Tibial artery (tissue), 4 donors: ENCODE measurements at regions of chr9 and their contacts with region 1.

Region 1: GRCh38 chr9:81689343-81690190 is at the start of gene TLE1:
- DNase-seq: peak; percentile 100
- H3K4me3 ChIP-seq: peak within 1 kb of the TSS; percentile 77 to 95
- H3K27ac ChIP-seq: peak within 1 kb of the TSS; percentile 91 to 98
- H3K4me1 ChIP-seq: peaks cover 0 to 27% (median 19%) of the 10 kb centered on the region in 4 donors
- H3K27me3 ChIP-seq: no peaks in the 10 kb centered on the region
- CTCF ChIP-seq: no peak

Region 2: GRCh38 chr9:81521892-81522291 is 167.7 kb before region 1 on chr9:
- intact Hi-C with region 1: loop called (anchors 2 kb)
- DNase-seq: no peak
- H3K4me3 ChIP-seq: no peak overlapping the region
- H3K27ac ChIP-seq: no peak overlapping the region
- H3K4me1 ChIP-seq: peaks cover 0 to 4% (median 0%) of the 10 kb centered on the region in 4 donors
- H3K27me3 ChIP-seq: no peaks in the 10 kb centered on the region
- CTCF ChIP-seq: no peak

Region 3: DNA sequence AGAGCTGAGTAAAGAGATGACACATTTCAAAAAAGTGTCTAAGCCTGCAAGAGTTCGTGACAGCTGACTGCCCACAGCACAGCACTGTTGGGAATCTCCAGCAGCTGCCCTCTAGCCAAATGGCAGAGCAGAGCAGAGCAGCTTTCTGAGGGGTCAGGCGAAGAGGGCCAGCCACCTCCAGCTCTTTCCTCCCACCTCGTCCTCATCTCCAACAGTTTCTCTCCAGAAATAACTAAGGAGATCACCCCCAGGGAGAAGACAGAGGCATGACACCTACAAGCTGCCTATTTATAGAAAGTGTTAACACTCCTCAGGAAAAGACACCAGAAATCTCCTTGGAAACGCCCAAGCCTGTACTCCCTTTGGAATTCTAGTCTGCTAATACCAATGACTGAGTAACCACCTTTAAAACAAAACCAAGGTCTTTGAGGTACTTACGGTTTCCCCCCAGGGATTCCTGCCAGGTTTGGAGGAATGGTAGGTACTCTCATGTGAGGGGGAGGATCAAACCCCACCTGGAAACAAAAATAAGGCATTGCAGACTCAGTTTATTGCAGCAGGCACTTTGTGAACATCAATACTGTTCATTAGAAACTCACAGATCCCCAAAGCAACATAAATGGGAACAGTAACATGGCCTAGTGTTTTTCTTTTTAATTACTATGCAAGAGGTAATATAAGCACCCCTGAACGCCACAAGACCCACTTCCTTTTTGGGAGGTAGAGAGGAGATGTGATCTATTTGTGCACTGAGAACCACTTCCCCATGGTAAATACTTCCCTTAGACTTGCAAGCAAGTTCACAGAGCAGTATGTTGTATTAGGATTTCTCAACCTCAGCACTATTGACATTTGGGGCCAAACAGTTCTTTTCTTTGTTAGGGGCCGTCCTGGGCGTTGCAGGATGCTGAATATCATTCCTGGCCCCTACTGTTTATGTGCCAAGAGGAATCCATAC is 79.5 kb before region 1 on chr9:
- intact Hi-C with region 1: loop called (anchors 5 kb)
- DNase-seq: no peak
- H3K4me3 ChIP-seq: no peak overlapping the region
- H3K27ac ChIP-seq: peak overlapping the region; percentile 15 to 50
- H3K4me1 ChIP-seq: peaks cover 0 to 35% (median 15%) of the 10 kb centered on the region in 4 donors
- H3K27me3 ChIP-seq: no peaks in the 10 kb centered on the region
- CTCF ChIP-seq: no peak

Region 4: GRCh38 chr9:81632599-81632998 is 57.0 kb before region 1 on chr9:
- intact Hi-C with region 1: no loop called
- DNase-seq: no peak
- H3K4me3 ChIP-seq: no peak overlapping the region
- H3K27ac ChIP-seq: no peak overlapping the region
- H3K4me1 ChIP-seq: peaks cover 0 to 26% (median 0%) of the 10 kb centered on the region in 4 donors
- H3K27me3 ChIP-seq: no peaks in the 10 kb centered on the region
- CTCF ChIP-seq: no peak

Region 5: DNA sequence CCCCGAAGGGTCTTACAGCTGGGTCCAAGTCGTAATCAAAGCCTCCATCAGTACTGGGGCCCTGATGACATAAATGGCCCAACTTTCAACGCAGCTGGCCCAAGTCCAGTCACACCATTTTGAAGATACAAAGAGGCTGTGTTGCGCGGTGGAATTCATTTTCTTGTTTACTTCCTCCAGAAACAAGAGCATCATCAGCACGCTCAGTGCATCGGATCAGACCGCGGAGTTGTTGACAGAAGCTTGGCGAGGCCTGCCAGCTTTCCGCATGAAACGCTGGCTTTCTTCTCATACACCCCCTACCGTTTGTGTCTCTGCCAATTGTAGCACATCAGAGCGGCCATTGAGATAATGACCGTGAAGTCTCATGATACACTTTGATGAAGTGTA is 136.9 kb after region 1 on chr9:
- intact Hi-C with region 1: no loop called
- DNase-seq: peak in 1 of 2 donors; percentile 28
- H3K4me3 ChIP-seq: no peak overlapping the region
- H3K27ac ChIP-seq: no peak overlapping the region
- H3K4me1 ChIP-seq: no peaks in the 10 kb centered on the region
- H3K27me3 ChIP-seq: no peaks in the 10 kb centered on the region
- CTCF ChIP-seq: no peak

Region 6: GRCh38 chr9:81844131-81844567 is 154.6 kb after region 1 on chr9:
- intact Hi-C with region 1: loop called (anchors 5 kb)
- DNase-seq: no peak
- H3K4me3 ChIP-seq: no peak overlapping the region
- H3K27ac ChIP-seq: peak overlapping the region in 1 of 2 donors; percentile 63
- H3K4me1 ChIP-seq: peaks cover 0 to 3% (median 1%) of the 10 kb centered on the region in 4 donors
- H3K27me3 ChIP-seq: no peaks in the 10 kb centered on the region
- CTCF ChIP-seq: no peak